Activated CD4-positive, alpha-beta memory T cell treated with anti-CD3 and anti-CD28 coated beads, Interleukin-2, amount 10 ng/mL, durations not matched to agents 7 days and 5 days (primary cell): ENCODE measurements at regions of chr17 and their contacts with region 1.

Region 1: GRCh38 chr17:77331301-77331864 is 190.6 kb downstream of the SEC14L1 start:
- DNase-seq: peak; percentile 97
- H3K4me3 Mint-ChIP-seq: peak overlapping the region; percentile 73
- H3K27ac Mint-ChIP-seq: peak overlapping the region; percentile 90
- H3K4me1 Mint-ChIP-seq: peaks cover 46% of the 10 kb centered on the region
- H3K27me3 Mint-ChIP-seq: no peaks in the 10 kb centered on the region

Region 2: DNA sequence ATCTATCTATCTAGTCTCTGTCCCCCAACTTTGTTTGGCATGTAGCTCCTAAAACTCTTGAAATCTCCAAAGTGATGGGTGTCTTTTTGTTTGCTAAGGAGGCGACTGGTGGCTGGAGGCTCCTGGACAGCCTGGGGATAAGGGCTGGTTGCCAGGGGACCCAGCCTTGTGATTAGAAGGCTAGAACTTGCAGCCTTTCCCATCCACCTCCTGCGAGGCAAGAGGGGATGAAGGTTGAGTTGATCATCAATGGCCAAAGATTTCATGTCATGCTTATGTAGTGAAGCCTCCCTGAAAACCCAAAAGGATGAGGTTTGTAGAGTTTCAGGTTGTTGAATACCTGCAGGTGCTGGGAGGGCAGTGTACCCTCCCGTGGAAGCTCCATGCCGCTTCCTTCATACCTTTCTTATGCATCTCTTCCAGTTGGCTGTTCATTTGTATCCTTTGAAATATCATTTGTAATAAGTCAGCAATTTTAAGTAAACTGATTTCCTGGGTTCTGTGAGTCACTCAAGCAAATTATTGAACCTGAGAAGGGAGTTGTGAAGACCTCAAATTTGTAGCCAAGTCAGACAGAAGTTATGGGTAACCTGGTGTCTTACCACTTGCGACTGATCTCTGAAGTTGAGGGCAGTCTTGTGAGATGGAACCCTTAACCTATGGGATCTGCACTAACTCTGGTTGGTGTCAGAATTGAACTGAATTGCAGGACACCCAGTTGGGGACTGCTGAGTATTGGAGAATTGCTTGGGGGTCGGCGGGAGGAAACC is 11.8 kb after region 1 on chr17:
- CTCF ChIA-PET with region 1: interaction called, 6 read pairs
- POLR2A ChIA-PET with region 1: interaction called, 11 read pairs
- DNase-seq: no peak
- H3K4me3 Mint-ChIP-seq: peak overlapping the region; percentile 61
- H3K27ac Mint-ChIP-seq: peak overlapping the region; percentile 92
- H3K4me1 Mint-ChIP-seq: peaks cover 58% of the 10 kb centered on the region
- H3K27me3 Mint-ChIP-seq: no peaks in the 10 kb centered on the region

Region 3: DNA sequence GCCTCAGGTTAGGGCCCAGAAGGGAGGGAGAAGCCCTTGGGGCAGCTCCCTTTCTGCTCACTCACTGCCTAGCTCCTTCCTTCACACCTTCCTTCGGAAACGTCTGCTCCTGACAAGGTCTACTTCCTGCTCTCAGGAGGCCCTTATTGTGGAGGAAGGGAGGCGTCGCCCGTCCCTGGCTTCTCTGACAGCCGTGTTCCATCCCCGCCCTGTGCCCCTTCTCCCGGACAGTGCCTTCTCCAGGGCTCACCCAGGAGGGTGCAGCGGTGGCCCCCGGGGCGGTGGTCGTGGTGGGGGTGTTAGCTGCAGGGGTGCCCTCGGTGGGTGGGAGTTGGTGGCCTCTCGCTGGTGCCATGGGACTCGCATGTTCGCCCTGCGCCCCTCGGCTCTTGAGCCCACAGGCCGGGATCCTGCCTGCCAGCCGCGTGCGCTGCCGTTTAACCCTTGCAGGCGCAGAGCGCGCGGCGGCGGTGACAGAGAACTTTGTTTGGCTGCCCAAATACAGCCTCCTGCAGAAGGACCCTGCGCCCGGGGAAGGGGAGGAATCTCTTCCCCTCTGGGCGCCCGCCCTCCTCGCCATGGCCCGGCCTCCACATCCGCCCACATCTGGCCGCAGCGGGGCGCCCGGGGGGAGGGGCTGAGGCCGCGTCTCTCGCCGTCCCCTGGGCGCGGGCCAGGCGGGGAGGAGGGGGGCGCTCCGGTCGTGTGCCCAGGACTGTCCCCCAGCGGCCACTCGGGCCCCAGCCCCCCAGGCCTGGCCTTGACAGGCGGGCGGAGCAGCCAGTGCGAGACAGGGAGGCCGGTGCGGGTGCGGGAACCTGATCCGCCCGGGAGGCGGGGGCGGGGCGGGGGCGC is 41.3 kb after region 1 on chr17:
- CTCF ChIA-PET with region 1: interaction called, 33 read pairs
- POLR2A ChIA-PET with region 1: interaction called, 23 read pairs
- DNase-seq: peak; percentile 81
- H3K4me3 Mint-ChIP-seq: peak overlapping the region; percentile 74
- H3K27ac Mint-ChIP-seq: peak overlapping the region; percentile 82
- H3K4me1 Mint-ChIP-seq: peaks cover 51% of the 10 kb centered on the region
- H3K27me3 Mint-ChIP-seq: peaks cover 3% of the 10 kb centered on the region

Region 4: GRCh38 chr17:77391668-77392375 is 60.4 kb after region 1 on chr17:
- CTCF ChIA-PET with region 1: interaction called, 22 read pairs
- POLR2A ChIA-PET with region 1: interaction called, 35 read pairs
- DNase-seq: peak; percentile 83
- H3K4me3 Mint-ChIP-seq: peak overlapping the region; percentile 66
- H3K27ac Mint-ChIP-seq: peak overlapping the region; percentile 85
- H3K4me1 Mint-ChIP-seq: peaks cover 83% of the 10 kb centered on the region
- H3K27me3 Mint-ChIP-seq: no peaks in the 10 kb centered on the region

Region 5: GRCh38 chr17:77429919-77430752 is 98.8 kb after region 1 on chr17:
- CTCF ChIA-PET with region 1: interaction called, 29 read pairs
- POLR2A ChIA-PET with region 1: interaction called, 5 read pairs
- DNase-seq: peak; percentile 83
- H3K4me3 Mint-ChIP-seq: no peak overlapping the region
- H3K27ac Mint-ChIP-seq: peak overlapping the region; percentile 38
- H3K4me1 Mint-ChIP-seq: peaks cover 83% of the 10 kb centered on the region
- H3K27me3 Mint-ChIP-seq: no peaks in the 10 kb centered on the region

Region 6: DNA sequence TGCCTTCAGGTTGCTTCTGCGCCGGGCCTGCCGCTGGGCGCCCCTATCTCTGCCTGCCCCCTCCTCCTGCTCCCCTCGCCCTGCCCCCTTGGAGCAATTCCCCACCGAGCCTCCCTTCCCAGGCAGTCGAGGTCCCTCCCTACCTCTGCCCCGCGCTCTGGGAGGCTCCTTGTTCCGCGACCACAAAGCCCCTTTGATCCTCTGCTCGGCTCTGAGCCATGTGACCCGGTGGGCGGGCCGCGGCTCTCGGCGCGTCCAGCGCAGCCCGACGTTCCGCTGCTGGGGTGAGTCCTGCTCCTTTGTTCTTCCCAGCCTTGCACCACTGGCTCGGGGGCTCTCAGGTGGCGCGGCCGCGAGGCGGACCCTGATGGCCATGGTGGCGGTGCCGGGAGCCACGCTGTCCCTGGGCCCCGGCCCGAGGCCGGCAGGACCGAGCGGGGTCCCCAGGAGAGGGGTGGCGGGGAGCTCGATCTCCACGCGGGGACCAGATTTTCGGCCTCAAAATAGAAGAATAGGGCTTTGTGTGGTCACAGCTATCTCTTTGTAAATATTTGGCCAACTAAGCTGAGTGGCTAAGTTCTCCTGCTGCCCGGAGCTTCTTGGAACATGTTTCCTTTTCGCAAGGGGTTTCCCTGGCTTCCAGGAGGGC is 120.0 kb after region 1 on chr17:
- CTCF ChIA-PET with region 1: interaction called, 3 read pairs
- POLR2A ChIA-PET with region 1: interaction called, 15 read pairs
- DNase-seq: peak; percentile 71
- H3K4me3 Mint-ChIP-seq: peak overlapping the region; percentile 90
- H3K27ac Mint-ChIP-seq: peak overlapping the region; percentile 99
- H3K4me1 Mint-ChIP-seq: peaks cover 74% of the 10 kb centered on the region
- H3K27me3 Mint-ChIP-seq: no peaks in the 10 kb centered on the region

Region 7: GRCh38 chr17:77494664-77495435 is 163.5 kb after region 1 on chr17:
- CTCF ChIA-PET with region 1: interaction called, 33 read pairs
- POLR2A ChIA-PET with region 1: interaction called, 7 read pairs
- DNase-seq: peak; percentile 76
- H3K4me3 Mint-ChIP-seq: no peak overlapping the region
- H3K27ac Mint-ChIP-seq: peak overlapping the region; percentile 65
- H3K4me1 Mint-ChIP-seq: peaks cover 25% of the 10 kb centered on the region
- H3K27me3 Mint-ChIP-seq: no peaks in the 10 kb centered on the region